CD4-positive, alpha-beta memory T cell (primary cell): ENCODE measurements at regions of chr19 and their contacts with region 1.

Region 1: GRCh38 chr19:14496028-14496833 is at the start of gene GIPC1:
- DNase-seq: peak; percentile 83 to 90 (median 85)
- H3K4me3 ChIP-seq: peak within 1 kb of the TSS; percentile 42 to 56
- H3K4me3 Mint-ChIP-seq: peak within 1 kb of the TSS; percentile 84 to 92 (median 88)
- H3K27ac ChIP-seq: peak within 1 kb of the TSS; percentile 63
- H3K27ac Mint-ChIP-seq: peak within 1 kb of the TSS; percentile 84 to 96 (median 90)
- H3K4me1 ChIP-seq: peaks cover 27% of the 10 kb centered on the region
- H3K4me1 Mint-ChIP-seq: peaks cover 23 to 40% (median 29%) of the 10 kb centered on the region in 4 donors
- H3K27me3 ChIP-seq: no peaks in the 10 kb centered on the region
- H3K27me3 Mint-ChIP-seq: no peaks in the 10 kb centered on the region
- total RNA-seq, gene GIPC1: 32.3 to 33.8 TPM

Region 2: GRCh38 chr19:14529254-14530004 is 33.2 kb after region 1 on chr19 and contains the start of gene TECR:
- CTCF ChIA-PET with region 1: interaction called, 3 read pairs
- POLR2A ChIA-PET with region 1: interaction called, 1,220 read pairs
- intact Hi-C with region 1: no loop called
- DNase-seq: peak; percentile 100
- H3K4me3 ChIP-seq: peak within 1 kb of the TSS; percentile 99 to 100
- H3K4me3 Mint-ChIP-seq: peak within 1 kb of the TSS; percentile 89 to 96 (median 94)
- H3K27ac ChIP-seq: peak within 1 kb of the TSS; percentile 88
- H3K27ac Mint-ChIP-seq: peak within 1 kb of the TSS; percentile 98 to 100 (median 99)
- H3K4me1 ChIP-seq: peaks cover 47% of the 10 kb centered on the region
- H3K4me1 Mint-ChIP-seq: peaks cover 17 to 65% (median 44%) of the 10 kb centered on the region in 4 donors
- H3K27me3 ChIP-seq: no peaks in the 10 kb centered on the region
- H3K27me3 Mint-ChIP-seq: no peaks in the 10 kb centered on the region
- total RNA-seq, gene TECR: 189 to 194 TPM

Region 3: GRCh38 chr19:14550201-14550784 is 54.1 kb after region 1 on chr19:
- CTCF ChIA-PET with region 1: interaction called, 23 read pairs
- POLR2A ChIA-PET with region 1: interaction called, 5 read pairs
- intact Hi-C with region 1: no loop called
- DNase-seq: no peak
- H3K4me3 ChIP-seq: no peak overlapping the region
- H3K4me3 Mint-ChIP-seq: peak overlapping the region in 1 of 8 donors; percentile 36
- H3K27ac ChIP-seq: no peak overlapping the region
- H3K27ac Mint-ChIP-seq: peak overlapping the region in 4 of 7 donors; percentile 63 to 95 (median 73)
- H3K4me1 ChIP-seq: peaks cover 38% of the 10 kb centered on the region
- H3K4me1 Mint-ChIP-seq: peaks cover 19 to 64% (median 34%) of the 10 kb centered on the region in 4 donors
- H3K27me3 ChIP-seq: no peaks in the 10 kb centered on the region
- H3K27me3 Mint-ChIP-seq: no peaks in the 10 kb centered on the region